Posterior vena cava (tissue), 2 donors: ENCODE measurements at regions of chr6 and their contacts with region 1.

Region 1: GRCh38 chr6:44237813-44238433 is 9.0 kb upstream of the HSP90AB1 start:
- DNase-seq: peak; percentile 95

Region 2: DNA sequence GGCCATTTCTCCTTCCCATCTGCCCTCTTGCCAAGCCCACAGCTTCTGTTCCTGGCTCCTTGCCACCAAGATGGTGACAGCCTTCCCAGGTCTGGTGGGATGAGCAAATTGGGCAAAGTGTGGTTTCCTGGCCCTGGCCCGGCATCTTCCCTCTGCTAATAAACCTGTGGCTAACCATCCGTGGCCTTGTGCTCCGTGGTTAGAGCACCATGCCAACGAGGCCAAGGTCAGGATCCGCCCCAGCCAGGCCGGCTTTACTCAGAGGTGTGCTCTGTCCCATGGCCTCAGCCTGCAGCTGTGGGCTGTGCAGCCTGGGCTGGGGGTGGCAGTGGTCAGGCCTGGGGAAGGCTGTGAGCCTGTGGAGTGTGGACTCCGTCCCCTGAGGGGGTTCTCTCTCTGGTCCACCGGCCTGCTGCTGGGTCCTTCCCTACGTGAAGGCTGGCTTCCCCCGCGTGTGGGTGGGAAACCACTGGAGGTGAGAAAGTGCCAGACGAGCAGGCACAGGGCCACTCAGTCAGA is 350.5 kb before region 1 on chr6:
- intact Hi-C with region 1: no loop called
- DNase-seq: no peak

Region 3: GRCh38 chr6:44116641-44117382 is 121.1 kb before region 1 on chr6:
- intact Hi-C with region 1: loop called in 1 of 2 experiments (anchors 10 kb)
- DNase-seq: no peak

Region 4: DNA sequence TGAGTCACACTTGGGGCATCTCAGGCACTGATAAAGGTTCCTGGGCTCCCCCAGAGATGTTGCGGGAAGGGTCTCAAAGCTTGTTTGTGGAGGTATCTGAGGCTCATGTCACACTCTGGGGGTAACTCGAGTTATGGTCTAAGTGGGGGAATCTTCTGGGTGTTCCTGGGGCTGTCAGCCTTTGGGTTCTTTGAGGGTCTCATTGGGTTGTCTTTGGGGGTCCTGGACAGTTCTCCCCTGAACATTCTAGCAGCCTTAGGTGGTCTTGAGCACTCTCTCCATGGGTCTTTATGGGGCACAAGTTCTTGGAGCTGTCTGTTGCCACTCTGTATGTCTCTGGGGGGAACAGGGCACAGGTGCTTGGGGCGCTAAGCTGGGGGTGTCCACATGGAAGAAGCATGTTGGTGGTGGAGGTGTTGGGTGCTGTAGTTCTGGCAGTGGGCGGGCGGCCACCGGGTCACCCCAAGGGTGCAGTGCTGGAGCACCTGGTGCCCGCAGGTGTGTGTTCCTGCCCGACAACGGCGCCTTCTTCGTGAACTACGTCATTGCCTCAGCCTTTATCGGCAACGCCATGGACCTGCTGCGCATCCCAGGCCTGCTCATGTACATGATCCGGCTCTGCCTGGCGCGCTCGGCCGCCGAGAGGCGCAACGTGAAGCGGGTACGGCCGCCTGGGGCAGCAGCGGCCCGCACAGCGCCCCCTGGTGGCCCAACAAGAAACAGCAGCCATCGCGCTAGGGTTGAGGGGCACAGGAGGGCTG is 86.4 kb before region 1 on chr6:
- intact Hi-C with region 1: no loop called
- DNase-seq: peak; percentile 93

Region 5: DNA sequence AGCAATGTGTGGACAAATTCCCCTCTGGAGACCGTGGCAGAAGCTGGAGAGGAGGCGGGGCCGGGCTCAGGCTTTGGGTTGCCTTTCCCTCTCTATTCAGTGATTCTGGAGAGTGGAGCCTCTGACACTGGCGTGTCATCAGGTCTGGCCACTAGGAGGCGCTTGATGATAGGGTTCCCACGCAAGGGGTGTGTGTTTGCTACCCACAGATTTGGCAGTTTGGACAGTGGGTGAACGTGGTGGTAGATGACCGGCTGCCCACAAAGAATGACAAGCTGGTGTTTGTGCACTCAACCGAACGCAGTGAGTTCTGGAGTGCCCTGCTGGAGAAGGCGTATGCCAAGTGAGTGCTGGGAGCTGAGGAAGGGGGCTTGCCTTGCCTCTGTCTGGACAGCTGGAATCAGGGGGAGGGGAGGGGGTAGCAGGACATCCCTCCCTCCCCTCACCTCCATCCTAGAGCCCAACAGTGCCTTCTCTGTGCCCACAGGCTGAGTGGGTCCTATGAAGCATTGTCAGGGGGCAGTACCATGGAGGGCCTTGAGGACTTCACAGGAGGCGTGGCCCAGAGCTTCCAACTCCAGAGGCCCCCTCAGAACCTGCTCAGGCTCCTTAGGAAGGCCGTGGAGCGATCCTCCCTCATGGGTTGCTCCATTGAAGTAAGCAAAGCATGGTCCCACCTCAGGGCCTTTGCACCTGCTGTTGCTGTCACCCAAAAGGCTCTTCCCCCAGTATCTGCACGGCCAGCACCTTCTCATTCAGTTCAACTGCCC is 65.0 kb before region 1 on chr6:
- intact Hi-C with region 1: loop called (anchors 5 kb)
- DNase-seq: peak; percentile 95

Region 6: DNA sequence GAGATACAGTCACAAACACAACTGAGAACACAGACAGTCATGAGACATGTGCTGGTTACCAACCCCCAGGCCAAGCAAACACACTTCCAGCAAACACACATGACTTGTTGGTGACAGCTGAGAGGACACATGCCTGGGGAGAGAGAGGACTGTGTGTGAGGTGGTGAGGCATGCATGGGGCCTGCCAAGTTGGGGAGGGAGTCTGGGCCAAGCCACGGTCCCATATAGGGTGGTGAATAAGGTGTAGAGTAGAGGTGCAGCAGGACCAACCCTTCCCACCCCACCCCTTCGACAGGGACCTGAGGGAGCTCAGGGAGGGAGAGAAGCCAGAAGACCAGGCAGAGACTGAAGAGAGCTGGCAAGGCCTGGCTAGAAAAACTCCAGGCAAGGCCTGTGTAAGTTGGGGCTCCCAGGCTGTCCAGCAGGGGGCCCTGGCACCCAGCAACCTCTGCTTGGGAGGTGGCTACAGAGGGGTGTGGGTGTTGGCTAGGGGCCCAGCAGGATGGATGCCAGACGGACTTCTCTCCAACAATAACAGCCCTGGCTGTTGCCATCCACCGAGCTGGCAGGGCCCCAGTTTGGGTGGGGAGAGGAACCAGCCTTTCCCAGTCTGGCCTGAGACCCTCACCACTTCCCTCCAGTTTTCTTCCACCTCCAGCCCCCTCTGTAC is 16.5 kb before region 1 on chr6:
- intact Hi-C with region 1: no loop called
- DNase-seq: peak; percentile 96

Region 7: GRCh38 chr6:44422531-44422930 is 184.6 kb after region 1 on chr6:
- intact Hi-C with region 1: no loop called
- DNase-seq: no peak